ENCODE measurements at regions of chr1 and their contacts with region 1.

Region 1: GRCh38 chr1:84772428-84772943 is 82.2 kb upstream of the SSX2IP start:
- DNase-seq: peak; percentile 69 to 95 (median 88)
- H3K4me3 ChIP-seq: no peak overlapping the region
- H3K27ac ChIP-seq: peak overlapping the region in 14 of 59 donors; percentile 1 to 82 (median 20)
- H3K27me3 ChIP-seq: no peaks in the 10 kb centered on the region
- CTCF ChIP-seq: peak; percentile 79 to 99 (median 95)

Region 2: DNA sequence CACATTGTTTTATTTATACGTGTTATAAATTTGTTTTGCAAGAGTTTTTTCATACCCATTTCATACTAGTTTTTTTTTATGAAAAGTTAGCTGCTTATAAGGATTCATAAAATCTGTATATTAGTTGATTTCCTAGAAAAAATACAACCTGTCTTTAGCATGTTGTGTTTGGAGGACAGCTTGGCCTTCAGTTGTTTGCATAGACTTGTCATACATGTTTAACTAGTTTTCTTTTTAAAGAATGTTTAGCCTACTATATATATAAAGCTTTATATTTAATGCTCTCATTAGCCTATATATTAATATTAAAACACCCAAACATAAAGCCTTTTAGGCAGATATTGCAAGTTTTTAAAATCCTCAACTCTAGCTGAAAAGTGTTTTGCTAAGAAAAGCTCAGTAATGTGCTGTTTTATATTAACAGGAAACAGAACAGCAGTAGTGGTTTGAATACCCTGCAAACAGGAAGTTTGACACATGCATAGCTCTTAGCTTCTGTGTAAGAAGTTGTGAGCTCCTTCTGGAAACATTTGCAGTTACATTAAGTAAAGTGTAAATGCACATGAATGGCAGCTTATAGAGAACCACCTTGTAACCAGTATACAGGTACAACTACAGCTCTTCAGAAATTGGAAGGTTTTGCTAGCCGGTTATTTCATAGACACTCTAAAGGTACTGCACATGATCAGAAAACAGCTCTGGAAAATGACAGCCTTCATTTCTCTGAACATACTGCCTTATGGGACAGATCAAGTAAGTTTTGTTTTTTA is 628.5 kb before region 1 on chr1 and contains the start of gene PRKACB:
- intact Hi-C with region 1: loop called in 1 of 2 experiments (anchors 10 kb)
- DNase-seq: no peak
- H3K4me3 ChIP-seq: peak within 1 kb of the TSS in 46 of 59 donors; percentile 1 to 47 (median 20)
- H3K27ac ChIP-seq: peak within 1 kb of the TSS in 56 of 59 donors; percentile 2 to 80 (median 58)
- H3K27me3 ChIP-seq: no peaks in the 10 kb centered on the region
- CTCF ChIP-seq: peak in 1 of 56 donors; percentile 13
- total RNA-seq, gene PRKACB: 156 to 555 (median 433) TPM

Region 3: GRCh38 chr1:84936116-84936810 is 163.8 kb after region 1 on chr1:
- intact Hi-C with region 1: loop called (anchors 5 kb)
- DNase-seq: peak in 3 of 10 donors; percentile 30 to 46 (median 35)
- H3K4me3 ChIP-seq: peak overlapping the region in 13 of 59 donors; percentile 8 to 37 (median 25)
- H3K27ac ChIP-seq: no peak overlapping the region
- H3K27me3 ChIP-seq: no peaks in the 10 kb centered on the region
- CTCF ChIP-seq: peak; percentile 78 to 98 (median 91)

Measured in dorsolateral prefrontal cortex (tissue), 120 donors.